WTC11 (cell line): ENCODE measurements at regions of chr15 and their contacts with region 1.

Region 1: GRCh38 chr15:45795440-45796069 is 160.7 kb downstream of the SQOR start:
- DNase-seq: peak; percentile 46
- ATAC-seq: peak; percentile 95
- H3K4me3 Mint-ChIP-seq: no peak overlapping the region
- H3K27ac Mint-ChIP-seq: no peak overlapping the region
- H3K4me1 Mint-ChIP-seq: no peaks in the 10 kb centered on the region; the same call in 1 of the 2 replicates
- H3K27me3 Mint-ChIP-seq: no peaks in the 10 kb centered on the region; the same call in 1 of the 2 replicates
- CTCF ChIP-seq: peak; percentile 68

Region 2: DNA sequence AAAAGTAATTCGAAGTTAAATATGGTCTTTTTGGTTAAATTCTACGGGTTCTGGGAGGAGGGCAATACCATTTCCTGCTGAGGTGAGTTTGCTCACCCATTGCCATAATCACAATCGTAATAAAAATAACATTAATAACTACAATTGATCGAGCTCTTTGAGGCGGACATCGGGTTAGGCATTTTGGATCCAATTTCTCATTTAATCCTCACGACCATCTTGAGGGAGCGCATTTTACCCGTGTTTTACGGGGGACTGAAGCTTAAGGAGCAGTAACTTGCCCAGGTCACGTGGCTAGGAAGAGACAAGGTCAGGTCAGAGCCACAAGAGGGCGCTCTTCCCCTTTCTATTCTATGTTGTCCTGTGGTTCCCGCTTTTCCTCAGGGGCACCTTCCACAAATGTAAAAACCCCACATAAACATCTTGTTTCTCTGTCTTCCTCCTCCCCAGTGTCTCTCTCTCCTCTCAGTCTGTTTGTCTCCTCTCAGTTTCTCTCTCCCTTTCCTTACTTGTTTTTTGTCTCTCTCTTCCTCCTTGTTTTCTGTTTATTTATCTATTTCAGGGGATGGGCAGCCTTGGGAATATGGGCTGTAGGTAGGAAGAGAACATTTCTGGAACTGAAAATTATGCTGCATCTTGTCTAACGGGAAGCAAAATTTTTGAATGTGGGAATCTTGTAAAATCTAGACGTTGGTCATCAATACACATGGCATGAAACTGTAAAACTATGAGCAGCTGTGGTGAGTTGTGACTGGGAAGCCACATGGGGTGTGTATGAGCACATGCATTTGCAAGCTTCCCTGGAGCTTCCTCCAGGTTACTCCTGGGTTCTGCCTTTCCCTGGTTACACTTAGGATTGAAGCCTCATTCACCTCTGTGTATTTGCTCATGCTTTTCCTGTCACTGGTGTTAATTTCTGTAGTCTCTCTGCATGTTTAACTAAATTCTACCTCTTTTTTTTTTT is 89.8 kb before region 1 on chr15:
- CTCF ChIA-PET with region 1: interaction called, 66 read pairs
- POLR2A ChIA-PET with region 1: interaction called, 4 read pairs
- DNase-seq: peak; percentile 78
- ATAC-seq: peak; percentile 38
- H3K4me3 Mint-ChIP-seq: peak overlapping the region; percentile 84
- H3K27ac Mint-ChIP-seq: peak overlapping the region; percentile 41
- H3K4me1 Mint-ChIP-seq: peaks cover 14% of the 10 kb centered on the region
- H3K27me3 Mint-ChIP-seq: peaks cover 19% of the 10 kb centered on the region
- CTCF ChIP-seq: peak; percentile 95

Region 3: DNA sequence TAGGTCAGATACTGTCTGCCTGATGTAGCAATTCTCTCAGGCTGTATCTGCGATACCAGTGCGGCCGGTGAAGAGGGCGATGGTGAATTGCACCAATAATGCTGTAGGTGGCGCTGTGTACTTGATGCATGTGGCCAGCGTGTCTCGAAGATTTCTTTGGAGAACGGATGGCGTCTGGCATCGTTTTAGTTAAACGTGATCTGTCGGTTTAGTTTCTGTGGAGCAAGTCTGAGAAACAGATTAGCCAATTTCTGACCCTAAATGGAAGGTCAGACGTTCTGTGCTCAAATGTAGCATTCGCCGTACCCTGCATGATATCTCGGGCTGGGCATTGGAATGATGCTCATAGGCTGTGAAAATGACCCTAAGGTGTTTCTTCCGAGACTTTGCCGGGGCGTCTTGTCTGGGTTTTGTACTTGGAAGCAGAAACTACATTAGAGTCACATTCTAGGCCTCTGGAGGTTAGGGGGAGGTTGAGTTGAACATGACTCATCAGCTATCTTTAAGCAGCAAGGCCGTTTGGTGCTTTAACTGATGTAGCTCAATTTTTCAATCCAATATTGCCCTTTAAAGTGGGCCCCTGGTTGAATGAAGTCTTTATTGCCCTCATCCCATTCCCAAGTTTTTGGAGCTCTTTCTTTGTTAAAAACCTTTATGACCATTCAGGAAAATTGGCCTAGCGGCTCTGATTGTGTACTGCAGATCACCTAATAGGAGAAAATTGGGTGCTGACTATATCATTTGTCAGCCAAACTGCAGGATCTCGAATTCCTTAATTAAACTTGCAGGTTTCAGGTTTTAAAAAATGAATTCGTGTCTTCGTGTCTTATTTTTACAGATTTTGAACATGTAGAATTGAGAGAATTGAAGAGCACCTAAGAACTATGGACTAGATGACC is 80.7 kb before region 1 on chr15:
- CTCF ChIA-PET with region 1: interaction called, 37 read pairs
- POLR2A ChIA-PET with region 1: no interaction called
- DNase-seq: peak; percentile 81
- ATAC-seq: peak; percentile 89
- H3K4me3 Mint-ChIP-seq: no peak overlapping the region
- H3K27ac Mint-ChIP-seq: no peak overlapping the region
- H3K4me1 Mint-ChIP-seq: peaks cover 8% of the 10 kb centered on the region
- H3K27me3 Mint-ChIP-seq: no peaks in the 10 kb centered on the region
- CTCF ChIP-seq: peak; percentile 92

Region 4: GRCh38 chr15:45780352-45780751 is 15.2 kb before region 1 on chr15:
- CTCF ChIA-PET with region 1: interaction called, 23 read pairs
- POLR2A ChIA-PET with region 1: no interaction called
- DNase-seq: peak; percentile 19
- ATAC-seq: peak; percentile 75
- H3K4me3 Mint-ChIP-seq: no peak overlapping the region
- H3K27ac Mint-ChIP-seq: no peak overlapping the region
- H3K4me1 Mint-ChIP-seq: peaks cover 25% of the 10 kb centered on the region
- H3K27me3 Mint-ChIP-seq: no peaks in the 10 kb centered on the region
- CTCF ChIP-seq: no peak

Region 5: GRCh38 chr15:46304320-46304719 is 508.8 kb after region 1 on chr15:
- CTCF ChIA-PET with region 1: interaction called, 11 read pairs
- POLR2A ChIA-PET with region 1: no interaction called
- DNase-seq: peak; percentile 67
- ATAC-seq: peak; percentile 46; the same call in 1 of the 2 replicates
- H3K4me3 Mint-ChIP-seq: no peak overlapping the region
- H3K27ac Mint-ChIP-seq: no peak overlapping the region
- H3K4me1 Mint-ChIP-seq: 0 out of 2 replicates have a peak, but pooled peaks cover 5% of the 10 kb centered on the region
- H3K27me3 Mint-ChIP-seq: no peaks in the 10 kb centered on the region
- CTCF ChIP-seq: peak; percentile 67